ENCODE measurements at regions of chr11 and their contacts with region 1.

Region 1: GRCh38 chr11:102530558-102530957 is at the start of gene MMP7:
- DNase-seq: no peak
- ATAC-seq: no peak
- H3K4me3 ChIP-seq: no peak within 1 kb of the TSS
- H3K27ac ChIP-seq: no peak within 1 kb of the TSS
- H3K4me1 ChIP-seq: no peaks in the 10 kb centered on the region
- H3K27me3 ChIP-seq: no peaks in the 10 kb centered on the region
- total RNA-seq, gene MMP7: 0.42 to 2.2 TPM

Region 2: DNA sequence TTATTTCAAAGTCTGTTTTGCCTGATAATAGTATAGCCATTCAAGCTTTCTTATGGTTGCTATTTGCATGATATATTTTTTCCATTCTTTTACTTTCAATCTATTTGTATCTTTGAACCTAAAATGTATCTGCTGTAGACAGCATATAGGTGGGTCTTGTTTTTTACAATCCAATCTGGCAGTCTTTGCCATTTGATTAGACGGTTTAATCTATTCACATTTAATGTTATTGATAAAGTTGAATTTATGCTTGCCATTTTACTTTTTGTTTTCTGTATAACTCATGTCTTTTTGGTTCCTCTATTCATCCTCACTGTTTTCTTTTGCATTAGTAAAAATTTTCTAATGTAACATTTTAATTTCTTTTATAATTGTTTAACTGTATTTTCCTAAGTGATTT is 57.2 kb after region 1 on chr11:
- intact Hi-C with region 1: loop called in 1 of 2 experiments (anchors 2 kb)
- DNase-seq: no peak
- ATAC-seq: no peak
- H3K4me3 ChIP-seq: no peak overlapping the region
- H3K27ac ChIP-seq: no peak overlapping the region
- H3K4me1 ChIP-seq: no peaks in the 10 kb centered on the region
- H3K27me3 ChIP-seq: peaks cover 0 to 2% of the 10 kb centered on the region in 2 donors

Measured in aorta (tissue), 5 donors.